ENCODE measurements at regions of chr4 and their contacts with region 1.

Region 1: GRCh38 chr4:158768555-158769174 is at the start of gene FNIP2:
- DNase-seq: peak; percentile 85 to 87
- ATAC-seq: peak; percentile 91 to 97 (median 94)
- H3K4me3 ChIP-seq: peak within 1 kb of the TSS; percentile 81 to 93 (median 88)
- H3K27ac ChIP-seq: peak within 1 kb of the TSS; percentile 73 to 95 (median 91)
- H3K4me1 ChIP-seq: peaks cover 8 to 57% (median 43%) of the 10 kb centered on the region in 9 donors
- H3K27me3 ChIP-seq: no peaks in the 10 kb centered on the region
- CTCF ChIP-seq: no peak
- total RNA-seq, gene FNIP2: 34.1 to 89.7 (median 53.4) TPM

Region 2: GRCh38 chr4:158809611-158810486 is 41.2 kb after region 1 on chr4:
- intact Hi-C with region 1: loop called in 4 of 10 experiments (anchors 2 to 5 kb)
- DNase-seq: peak in 1 of 2 donors; percentile 43
- ATAC-seq: peak; percentile 42 to 73 (median 62)
- H3K4me3 ChIP-seq: peak overlapping the region in 6 of 10 donors; percentile 1 to 32 (median 6)
- H3K27ac ChIP-seq: peak overlapping the region; percentile 55 to 89 (median 80)
- H3K4me1 ChIP-seq: peaks cover 15 to 97% (median 81%) of the 10 kb centered on the region in 9 donors
- H3K27me3 ChIP-seq: no peaks in the 10 kb centered on the region
- CTCF ChIP-seq: no peak

Region 3: DNA sequence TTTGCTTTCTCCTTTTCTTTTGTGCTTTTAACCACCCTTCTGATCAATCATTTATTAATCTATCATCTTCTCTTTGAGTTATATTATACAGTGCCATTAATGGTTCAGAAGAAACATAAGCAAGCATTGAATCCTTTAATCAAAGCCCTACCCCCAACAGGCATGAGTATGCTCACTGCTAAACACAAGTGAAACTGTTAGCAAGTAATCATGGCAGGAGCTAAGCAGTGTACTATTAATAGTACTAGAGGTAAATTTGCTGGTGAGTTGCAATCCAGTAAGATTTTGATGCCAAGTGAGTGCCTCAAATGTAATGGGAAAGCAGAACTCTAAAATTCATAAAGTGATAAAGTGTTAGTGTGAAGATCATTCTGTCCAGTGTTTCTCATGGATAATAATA is 57.4 kb after region 1 on chr4:
- intact Hi-C with region 1: loop called in 2 of 10 experiments (anchors 5 to 10 kb)
- DNase-seq: no peak
- ATAC-seq: peak; percentile 30 to 79 (median 55)
- H3K4me3 ChIP-seq: no peak overlapping the region
- H3K27ac ChIP-seq: peak overlapping the region; percentile 40 to 83 (median 68)
- H3K4me1 ChIP-seq: peaks cover 27 to 76% (median 63%) of the 10 kb centered on the region in 9 donors
- H3K27me3 ChIP-seq: no peaks in the 10 kb centered on the region
- CTCF ChIP-seq: no peak

Region 4: DNA sequence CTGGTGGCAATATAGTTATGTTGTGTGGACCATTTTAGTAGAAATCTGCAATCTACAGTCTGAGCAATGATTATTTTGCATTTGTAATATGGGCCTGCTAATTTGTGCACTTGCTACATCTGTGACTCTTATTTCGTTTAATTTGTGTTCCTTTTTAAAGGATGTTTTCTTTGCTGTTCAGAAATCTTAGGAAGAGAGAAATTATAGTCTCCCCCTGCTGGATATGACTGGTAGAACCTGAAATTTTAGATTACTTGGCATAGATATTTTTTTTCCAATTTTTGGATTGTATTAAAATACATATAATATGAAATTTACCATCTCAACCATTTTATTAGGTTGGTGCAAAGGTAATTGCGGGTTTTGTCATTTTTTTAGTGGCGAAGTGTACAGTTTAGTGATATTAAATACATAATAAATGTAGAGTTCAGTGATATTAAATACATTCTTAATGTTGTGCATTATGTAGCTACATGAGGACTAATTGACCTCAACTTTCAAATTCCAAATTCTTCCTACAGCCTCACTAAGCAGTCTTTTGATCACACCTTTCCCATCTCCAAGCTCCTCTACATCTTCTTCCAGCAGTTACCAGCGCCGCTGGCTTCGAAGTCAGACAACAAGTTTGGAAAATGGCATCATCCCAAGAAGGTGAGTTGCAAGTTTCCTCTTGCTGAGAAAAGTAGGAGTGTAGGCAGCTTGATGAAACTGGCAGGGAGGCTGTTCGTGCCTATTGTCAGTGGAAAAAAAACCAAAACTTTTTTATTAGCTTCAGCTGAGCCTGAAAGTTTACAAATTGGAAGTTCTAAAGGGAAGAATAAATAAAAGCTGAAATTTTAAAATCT is 82.4 kb after region 1 on chr4:
- intact Hi-C with region 1: loop called in 4 of 10 experiments (anchors 2 to 5 kb)
- DNase-seq: no peak
- ATAC-seq: no peak
- H3K4me3 ChIP-seq: no peak overlapping the region
- H3K27ac ChIP-seq: peak overlapping the region in 1 of 10 donors; percentile 38
- H3K4me1 ChIP-seq: peaks cover 0 to 42% (median 8%) of the 10 kb centered on the region in 9 donors
- H3K27me3 ChIP-seq: no peaks in the 10 kb centered on the region
- CTCF ChIP-seq: peak; percentile 63 to 82 (median 73)